Caki2 (cell line): ENCODE measurements at regions of chrX and their contacts with region 1.

Region 1: DNA sequence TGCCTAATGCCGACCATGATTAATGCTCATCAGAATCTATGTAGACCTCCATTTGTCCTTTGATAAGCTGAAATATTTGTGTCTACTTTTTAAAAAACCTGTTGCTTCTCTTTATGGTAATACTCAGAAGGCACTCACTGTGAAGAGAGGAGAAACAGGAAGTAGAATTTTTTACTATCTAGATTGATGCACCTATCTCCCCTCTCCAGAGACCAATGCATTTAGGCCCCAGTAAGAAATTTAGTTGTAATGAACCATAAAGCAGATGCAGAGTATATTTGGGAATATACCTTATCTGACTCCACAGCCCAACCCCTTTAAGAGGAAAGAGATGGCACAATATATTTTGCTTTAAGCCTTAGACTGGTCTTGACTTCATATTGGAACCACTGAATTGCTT is 11.1 kb downstream of the TBL1X start:
- DNase-seq: no peak

Region 2: DNA sequence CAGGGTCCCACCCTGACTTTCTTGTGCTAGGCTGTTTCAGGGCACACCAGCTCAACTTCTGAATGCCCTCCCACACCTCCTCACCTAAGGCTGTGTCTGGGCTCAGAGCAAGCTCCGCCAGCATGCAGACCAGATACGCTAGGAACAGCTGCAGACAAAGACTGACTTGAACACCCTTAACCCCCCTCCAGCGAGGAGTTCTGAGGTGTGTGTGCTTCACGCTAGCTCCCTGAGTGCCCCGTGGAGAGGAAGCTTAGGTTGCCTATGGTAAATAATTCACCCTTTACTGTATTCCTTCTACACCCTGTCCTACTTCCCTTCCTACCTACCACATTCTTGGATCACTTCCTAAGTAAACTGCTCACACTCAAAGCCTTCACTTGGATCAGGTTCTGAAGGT is 896.4 kb before region 1 on chrX:
- in situ Hi-C with region 1: no loop called
- DNase-seq: no peak

Region 3: GRCh38 chrX:8845060-8845459 is 630.9 kb before region 1 on chrX:
- in situ Hi-C with region 1: loop called (anchors 10 kb)
- DNase-seq: peak; percentile 88

Region 4: GRCh38 chrX:9379697-9380551 is 96.1 kb before region 1 on chrX:
- in situ Hi-C with region 1: no loop called
- DNase-seq: peak; percentile 58

Region 5: DNA sequence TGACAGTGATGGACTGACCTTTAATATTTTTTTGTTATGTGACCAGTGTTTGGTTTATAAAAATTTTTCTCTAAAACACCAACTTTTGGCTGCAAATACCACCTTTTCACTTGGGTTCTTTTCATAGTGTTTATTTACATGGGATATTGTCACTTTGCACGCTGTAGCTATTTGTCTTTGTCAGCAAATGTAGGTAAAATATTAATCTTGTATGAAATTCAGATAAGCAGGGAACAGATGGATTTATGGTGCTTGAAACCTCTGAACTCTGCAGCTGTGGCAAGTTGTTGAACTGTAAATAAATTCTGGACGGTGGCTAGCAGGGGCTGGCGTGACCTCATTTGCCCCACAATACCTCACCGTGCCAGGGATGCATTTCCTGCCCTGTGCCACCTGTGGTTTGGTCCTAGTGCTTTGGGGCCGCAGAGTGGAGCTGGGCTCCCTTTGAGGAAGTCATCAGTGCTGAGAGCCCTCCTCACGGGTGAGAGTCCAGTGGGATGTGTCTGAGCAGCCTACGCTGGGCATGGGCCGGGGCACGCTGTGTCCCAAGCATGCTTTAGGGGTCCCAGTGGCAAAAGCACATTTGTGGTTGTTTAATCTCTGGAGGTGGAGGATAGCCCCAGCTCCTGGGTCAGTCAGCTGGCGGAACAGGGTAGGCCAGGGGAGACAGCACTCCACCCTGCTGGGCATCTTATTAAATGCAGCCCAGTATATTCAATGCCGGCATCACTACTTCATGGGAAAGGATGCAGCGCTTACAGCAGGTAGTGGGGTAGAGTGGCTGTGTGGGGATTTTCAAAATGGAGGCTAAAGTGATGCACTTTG is 97.5 kb after region 1 on chrX:
- in situ Hi-C with region 1: no loop called
- DNase-seq: peak; percentile 48